Astrocyte of the cerebellum (primary cell): ENCODE measurements at regions of chr11 and their contacts with region 1.

Region 1: DNA sequence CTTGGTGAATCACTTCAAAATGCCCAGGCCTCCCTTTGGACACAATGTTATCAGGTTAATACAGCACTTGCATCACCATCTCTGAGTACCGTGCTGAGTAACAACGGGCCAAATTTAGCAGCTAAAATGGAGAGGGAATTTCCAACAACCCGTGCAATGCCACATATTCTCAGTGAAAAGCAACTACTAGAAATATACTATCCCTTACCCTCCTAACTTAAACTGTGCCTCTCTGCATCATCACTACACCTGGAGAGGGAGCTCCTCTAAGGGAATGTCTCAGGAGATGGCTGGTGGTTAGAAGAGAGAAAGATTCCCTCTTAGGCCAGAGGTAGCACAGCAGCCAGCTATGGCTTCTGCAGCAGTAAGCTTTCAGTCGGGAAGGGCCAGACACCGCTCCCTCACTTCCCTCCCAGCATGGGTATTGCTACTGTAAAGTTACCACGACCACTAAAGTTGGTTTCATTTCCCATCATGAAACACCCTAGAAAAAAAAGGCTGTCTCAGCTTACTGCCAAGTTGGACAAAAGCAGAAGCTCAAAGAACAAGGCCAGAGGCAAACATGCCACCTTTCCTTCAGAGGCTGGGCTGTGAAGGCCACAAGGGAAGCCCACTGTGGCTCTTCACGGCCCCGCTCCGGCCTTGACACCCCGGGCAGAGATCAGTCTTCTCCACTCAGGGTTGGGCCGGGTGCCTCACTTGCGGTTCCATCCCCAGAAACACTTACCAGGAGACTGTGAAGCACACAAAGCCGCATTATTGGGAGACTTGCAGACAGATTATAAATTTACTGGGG is 3.9 kb downstream of the MAML2 start:
- DNase-seq: no peak
- H3K4me3 ChIP-seq: peak overlapping the region; percentile 81
- CTCF ChIP-seq: peak; percentile 12

Region 2: GRCh38 chr11:96235751-96236150 is 103.4 kb before region 1 on chr11:
- in situ Hi-C with region 1: loop called (anchors 5 kb)
- DNase-seq: no peak
- H3K4me3 ChIP-seq: no peak overlapping the region
- CTCF ChIP-seq: no peak

Region 3: GRCh38 chr11:96288915-96289314 is 50.2 kb before region 1 on chr11:
- in situ Hi-C with region 1: loop called (anchors 5 kb)
- DNase-seq: no peak
- H3K4me3 ChIP-seq: no peak overlapping the region
- CTCF ChIP-seq: no peak

Region 4: GRCh38 chr11:96384150-96384549 is 45.0 kb after region 1 on chr11:
- in situ Hi-C with region 1: no loop called
- DNase-seq: no peak
- H3K4me3 ChIP-seq: no peak overlapping the region
- CTCF ChIP-seq: no peak